AG04450 (cell line): ENCODE measurements at regions of chr1 and their contacts with region 1.

Region 1: GRCh38 chr1:32714277-32714676 is 11.7 kb upstream of the SYNC start:
- DNase-seq: no peak
- H3K4me3 ChIP-seq: no peak overlapping the region
- H3K27ac ChIP-seq: no peak overlapping the region
- H3K27me3 ChIP-seq: no peaks in the 10 kb centered on the region
- CTCF ChIP-seq: no peak

Region 2: DNA sequence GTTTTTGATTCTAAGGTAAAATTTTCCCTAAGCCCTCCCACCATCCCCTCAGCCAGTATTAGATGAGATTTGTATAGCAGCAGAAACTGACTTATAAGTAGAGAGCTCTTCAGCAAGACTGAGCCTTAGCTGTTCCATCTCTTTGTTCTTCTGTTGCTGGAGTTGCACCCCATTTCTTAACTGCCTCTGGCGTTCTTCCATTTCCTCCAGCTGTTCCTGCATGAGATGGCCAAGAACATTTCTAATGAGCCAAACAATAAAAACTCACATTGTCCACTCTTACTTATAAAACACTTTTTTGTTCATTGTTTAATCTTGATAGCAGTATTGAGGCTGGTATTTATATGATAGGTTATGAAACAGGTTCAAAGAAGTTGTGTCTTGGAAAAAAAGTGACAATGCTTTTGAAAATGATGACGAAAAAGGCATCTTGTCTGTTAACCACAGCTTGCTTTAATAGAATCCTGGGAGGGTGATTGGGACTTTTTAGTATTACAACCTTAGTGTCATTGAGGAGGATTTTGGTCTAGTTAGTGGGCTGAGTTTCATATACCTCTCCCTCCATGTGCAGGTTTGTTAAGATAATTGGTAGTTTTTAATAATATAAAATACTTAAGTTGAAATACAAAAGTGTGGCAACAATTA is 30.0 kb before region 1 on chr1:
- CTCF ChIA-PET with region 1: interaction called, 14 read pairs
- POLR2A ChIA-PET with region 1: no interaction called
- DNase-seq: peak; percentile 55
- H3K4me3 ChIP-seq: no peak overlapping the region
- H3K27ac ChIP-seq: peak overlapping the region; percentile 70
- H3K27me3 ChIP-seq: no peaks in the 10 kb centered on the region
- CTCF ChIP-seq: no peak

Region 3: DNA sequence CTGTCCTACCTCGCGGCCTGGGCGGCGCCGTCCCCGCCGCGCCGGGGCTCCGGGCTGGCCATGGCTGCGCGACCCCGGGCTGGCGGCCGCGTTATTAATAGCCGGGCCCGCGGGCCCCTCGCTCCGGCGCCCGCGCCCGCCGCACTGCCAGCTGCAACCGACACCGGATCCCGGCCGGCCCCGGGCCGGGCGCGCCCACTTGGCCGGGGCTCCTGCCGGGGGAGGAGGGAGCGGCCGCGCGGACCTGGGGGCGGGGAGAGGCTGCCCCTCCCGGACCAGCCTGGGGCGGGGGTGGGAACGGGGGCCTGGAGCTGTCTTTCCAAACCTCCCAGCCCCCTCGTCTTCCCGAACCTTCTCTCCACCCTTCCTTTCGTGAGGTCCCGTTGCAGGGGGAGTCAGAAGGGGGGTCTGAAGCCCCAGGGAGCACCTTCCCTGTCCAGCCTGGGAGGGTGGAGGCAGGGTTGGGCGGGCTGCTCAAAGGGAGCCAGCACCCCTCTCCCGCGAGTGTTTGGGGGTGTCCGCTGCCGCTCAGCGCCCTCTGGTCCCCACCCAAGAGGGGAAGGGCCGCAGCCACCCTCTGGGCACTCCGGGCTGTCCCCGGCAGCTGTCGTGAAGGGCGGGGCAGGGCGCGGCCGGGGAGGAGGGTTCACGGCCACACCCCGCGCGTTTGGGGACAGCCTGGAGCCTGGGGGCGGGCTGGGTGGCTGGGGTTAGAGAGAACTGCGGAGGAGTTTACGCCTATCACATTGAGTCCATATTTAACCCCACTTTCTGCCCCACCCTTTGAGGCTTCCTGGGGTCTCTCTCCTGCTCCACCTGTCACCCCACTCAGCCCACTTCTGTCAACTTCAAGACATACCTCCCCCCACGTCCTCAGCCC is 11.4 kb before region 1 on chr1 and contains the start of gene SYNC:
- CTCF ChIA-PET with region 1: interaction called, 12 read pairs
- POLR2A ChIA-PET with region 1: interaction called, 6 read pairs
- DNase-seq: peak; percentile 63
- H3K4me3 ChIP-seq: peak within 1 kb of the TSS; percentile 81
- H3K27ac ChIP-seq: peak within 1 kb of the TSS; percentile 99
- H3K27me3 ChIP-seq: no peaks in the 10 kb centered on the region
- CTCF ChIP-seq: no peak
- polyA plus RNA-seq, gene SYNC: 50.4 and 65.1 TPM in 2 replicates

Region 4: DNA sequence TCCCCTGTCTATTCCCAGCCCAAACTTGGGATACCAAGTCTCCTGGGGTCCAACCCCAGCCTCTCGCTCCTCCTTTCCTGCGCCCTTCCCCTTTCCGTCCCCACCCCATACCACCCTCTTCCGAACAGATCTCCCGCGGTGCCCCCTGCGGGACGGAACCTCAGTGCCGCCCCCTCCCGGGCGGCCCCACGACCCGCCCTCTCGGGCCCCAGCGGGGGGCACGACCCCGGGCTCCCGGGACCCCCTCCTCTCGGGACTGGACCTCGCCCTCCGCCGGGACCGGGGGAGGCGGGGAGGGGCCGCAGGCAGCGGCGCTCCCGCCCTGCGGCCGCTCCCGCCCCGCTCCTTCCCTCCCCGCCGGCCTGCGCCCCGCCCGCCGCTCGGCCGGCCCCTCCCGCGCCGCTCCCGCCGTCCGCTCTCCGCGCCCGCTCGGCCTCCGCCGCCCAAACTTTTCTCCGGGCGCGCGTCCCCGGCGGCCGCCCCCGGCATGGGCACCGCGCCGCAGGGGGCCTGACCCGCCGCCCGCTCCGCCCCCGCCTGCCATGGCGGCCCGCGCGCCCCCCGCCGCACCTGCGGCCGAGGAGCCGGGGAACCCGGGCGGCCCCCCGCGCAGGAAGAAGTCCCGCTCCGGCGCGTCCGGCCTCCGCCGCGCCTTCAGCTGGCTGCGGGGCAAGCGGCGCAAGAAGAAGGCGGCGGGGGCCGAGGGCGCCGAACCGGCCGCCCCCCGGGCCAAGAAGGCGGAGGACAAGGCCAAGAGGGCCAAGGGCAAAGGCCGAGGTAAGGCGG is 27.3 kb after region 1 on chr1:
- CTCF ChIA-PET with region 1: interaction called, 15 read pairs
- POLR2A ChIA-PET with region 1: no interaction called
- DNase-seq: no peak
- H3K4me3 ChIP-seq: peak overlapping the region; percentile 68
- H3K27ac ChIP-seq: no peak overlapping the region
- H3K27me3 ChIP-seq: no peaks in the 10 kb centered on the region
- CTCF ChIP-seq: peak; percentile 47

Region 5: DNA sequence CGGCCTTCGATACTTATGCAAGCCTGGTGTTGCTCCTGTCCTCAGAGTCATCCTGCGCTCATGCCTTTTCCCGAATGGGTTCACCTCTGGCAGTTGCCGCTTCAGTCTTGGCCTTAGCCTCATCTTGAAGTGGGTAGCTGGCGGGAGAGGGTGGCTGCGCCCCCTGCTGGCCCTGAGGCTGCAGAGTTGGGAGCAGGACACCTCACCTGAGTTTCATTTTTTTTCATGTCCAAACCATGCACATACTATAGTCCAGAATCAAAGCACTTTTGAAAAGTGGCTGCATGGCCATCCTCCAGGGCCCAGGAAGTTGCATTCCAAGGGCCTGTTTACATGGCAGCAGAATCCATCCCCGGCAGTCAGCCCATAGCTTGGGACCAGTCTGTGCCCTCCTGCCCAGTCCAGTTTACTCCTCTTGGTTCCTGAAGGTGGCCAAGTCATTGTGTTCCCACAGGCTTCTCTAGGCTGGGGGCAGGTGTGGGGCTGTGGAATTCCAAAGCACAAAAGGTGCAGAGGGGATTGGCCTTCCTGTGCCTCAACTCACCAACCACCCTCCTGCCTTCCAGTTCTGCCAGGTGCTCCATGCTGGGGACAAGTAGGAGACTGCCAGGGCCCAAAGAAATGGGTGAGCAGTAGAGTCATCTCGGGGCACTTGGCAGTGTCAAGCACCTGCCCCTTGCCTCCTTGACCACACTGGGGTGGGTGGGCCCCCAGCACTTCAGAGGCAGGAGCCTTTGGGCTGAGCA is 58.9 kb after region 1 on chr1:
- CTCF ChIA-PET with region 1: interaction called, 133 read pairs
- POLR2A ChIA-PET with region 1: interaction called, 13 read pairs
- DNase-seq: peak; percentile 47
- H3K4me3 ChIP-seq: no peak overlapping the region
- H3K27ac ChIP-seq: no peak overlapping the region
- H3K27me3 ChIP-seq: peaks cover 2% of the 10 kb centered on the region
- CTCF ChIP-seq: peak; percentile 97